Activated CD4-positive, alpha-beta T cell treated with anti-CD3 and anti-CD28 coated beads for 36 hours (primary cell): ENCODE measurements at regions of chr9 and their contacts with region 1.

Region 1: DNA sequence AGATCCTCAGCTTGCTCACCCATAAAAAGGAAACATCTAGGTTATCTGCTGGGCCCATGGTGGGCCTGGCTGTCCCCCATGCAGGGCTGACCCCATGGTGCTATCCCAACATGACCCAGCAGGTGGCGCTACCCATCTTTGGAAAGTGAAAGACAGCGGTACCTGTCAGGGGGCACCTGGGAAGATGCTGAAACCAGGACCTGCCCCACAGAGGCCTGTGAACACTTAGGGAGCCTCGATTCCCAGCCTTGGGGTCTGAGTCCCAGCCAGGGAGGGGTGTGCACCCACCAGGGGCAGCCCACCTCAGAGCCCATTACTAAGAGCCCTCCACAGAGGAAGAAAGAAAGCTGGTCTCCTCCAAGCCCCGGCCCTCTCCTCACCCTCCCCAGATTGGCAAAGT is 46.6 kb upstream of the IPPK start:
- DNase-seq: peak; percentile 88
- ATAC-seq: peak; percentile 71
- H3K4me3 Mint-ChIP-seq: no peak overlapping the region
- H3K27ac Mint-ChIP-seq: peak overlapping the region; percentile 42
- H3K4me1 Mint-ChIP-seq: peaks cover 19% of the 10 kb centered on the region
- H3K27me3 Mint-ChIP-seq: no peaks in the 10 kb centered on the region

Region 2: DNA sequence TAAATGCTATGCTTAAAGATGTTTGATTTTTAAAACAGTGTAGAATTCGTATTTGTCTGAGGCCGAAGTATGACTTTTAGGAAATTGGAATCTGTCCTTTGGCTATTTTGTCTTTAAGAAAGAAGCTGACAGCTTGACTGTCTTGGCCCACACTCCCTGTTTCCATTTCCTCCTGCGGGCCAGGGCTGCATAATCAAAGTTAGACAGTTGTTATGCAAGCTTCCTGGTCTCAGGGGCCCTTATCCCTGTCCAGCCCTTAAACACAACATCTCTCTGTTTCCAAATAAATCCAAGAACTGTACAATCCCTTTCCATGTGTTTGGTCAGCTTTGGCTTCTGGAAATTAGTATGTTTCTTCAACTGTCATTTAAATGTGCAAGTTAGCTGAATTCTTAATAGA is 126.2 kb before region 1 on chr9:
- CTCF ChIA-PET with region 1: no interaction called
- POLR2A ChIA-PET with region 1: no interaction called
- intact Hi-C with region 1: no loop called
- DNase-seq: no peak
- ATAC-seq: no peak
- H3K4me3 Mint-ChIP-seq: no peak overlapping the region
- H3K27ac Mint-ChIP-seq: no peak overlapping the region
- H3K4me1 Mint-ChIP-seq: peaks cover 3% of the 10 kb centered on the region
- H3K27me3 Mint-ChIP-seq: no peaks in the 10 kb centered on the region

Region 3: GRCh38 chr9:92657296-92658094 is 59.1 kb before region 1 on chr9:
- CTCF ChIA-PET with region 1: no interaction called
- POLR2A ChIA-PET with region 1: no interaction called
- intact Hi-C with region 1: no loop called
- DNase-seq: no peak
- ATAC-seq: no peak
- H3K4me3 Mint-ChIP-seq: no peak overlapping the region
- H3K27ac Mint-ChIP-seq: no peak overlapping the region
- H3K4me1 Mint-ChIP-seq: peaks cover 7% of the 10 kb centered on the region
- H3K27me3 Mint-ChIP-seq: no peaks in the 10 kb centered on the region

Region 4: DNA sequence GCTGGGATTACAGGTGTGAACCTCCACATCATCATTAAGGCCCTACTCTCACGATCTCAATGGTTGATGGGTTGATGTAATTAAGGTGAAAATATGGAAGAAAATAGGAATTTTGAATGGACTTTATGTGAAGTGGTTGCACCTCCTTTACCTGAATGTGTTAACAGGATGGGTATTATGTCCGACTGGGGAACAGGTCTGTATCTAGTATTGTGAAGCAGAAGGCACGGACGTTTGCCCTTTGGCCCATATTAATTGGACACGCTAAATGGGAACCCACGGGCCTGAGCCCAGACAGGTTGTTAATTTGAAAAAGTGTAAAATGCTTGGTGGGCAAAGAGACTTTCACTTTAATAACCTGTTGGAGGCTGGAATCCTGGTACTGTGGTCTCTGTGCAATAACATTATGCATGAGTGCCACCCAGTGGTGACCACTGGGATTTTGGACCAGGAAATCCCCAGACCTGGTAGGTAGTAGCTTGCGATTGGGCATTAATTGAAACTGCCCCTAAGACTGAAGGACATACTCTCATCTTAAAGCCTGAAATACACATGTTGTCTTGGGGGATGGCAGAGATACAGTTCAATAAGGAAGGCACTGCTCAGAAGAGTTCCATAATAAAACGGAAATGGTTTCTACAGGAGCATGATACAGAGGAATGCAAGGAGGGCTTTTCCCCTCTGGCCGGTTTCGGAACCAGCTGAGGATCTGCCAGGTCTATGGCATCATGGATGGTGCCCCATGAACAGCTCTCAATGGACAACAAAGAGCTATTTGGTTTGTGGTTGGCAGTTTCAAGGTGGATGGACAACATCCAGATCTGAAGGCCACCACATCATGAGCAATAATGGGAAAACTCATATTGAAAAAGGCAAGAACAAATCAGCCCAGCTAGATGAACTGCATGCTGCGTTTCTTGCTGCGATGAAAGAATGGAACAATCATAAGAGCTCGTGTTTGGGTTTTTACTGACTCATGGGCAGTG is 74.3 kb after region 1 on chr9:
- CTCF ChIA-PET with region 1: interaction called, 71 read pairs
- POLR2A ChIA-PET with region 1: no interaction called
- intact Hi-C with region 1: loop called (anchors 1 kb)
- DNase-seq: peak; percentile 84
- ATAC-seq: peak; percentile 87
- H3K4me3 Mint-ChIP-seq: no peak overlapping the region
- H3K27ac Mint-ChIP-seq: no peak overlapping the region
- H3K4me1 Mint-ChIP-seq: peaks cover 9% of the 10 kb centered on the region
- H3K27me3 Mint-ChIP-seq: no peaks in the 10 kb centered on the region

Region 5: DNA sequence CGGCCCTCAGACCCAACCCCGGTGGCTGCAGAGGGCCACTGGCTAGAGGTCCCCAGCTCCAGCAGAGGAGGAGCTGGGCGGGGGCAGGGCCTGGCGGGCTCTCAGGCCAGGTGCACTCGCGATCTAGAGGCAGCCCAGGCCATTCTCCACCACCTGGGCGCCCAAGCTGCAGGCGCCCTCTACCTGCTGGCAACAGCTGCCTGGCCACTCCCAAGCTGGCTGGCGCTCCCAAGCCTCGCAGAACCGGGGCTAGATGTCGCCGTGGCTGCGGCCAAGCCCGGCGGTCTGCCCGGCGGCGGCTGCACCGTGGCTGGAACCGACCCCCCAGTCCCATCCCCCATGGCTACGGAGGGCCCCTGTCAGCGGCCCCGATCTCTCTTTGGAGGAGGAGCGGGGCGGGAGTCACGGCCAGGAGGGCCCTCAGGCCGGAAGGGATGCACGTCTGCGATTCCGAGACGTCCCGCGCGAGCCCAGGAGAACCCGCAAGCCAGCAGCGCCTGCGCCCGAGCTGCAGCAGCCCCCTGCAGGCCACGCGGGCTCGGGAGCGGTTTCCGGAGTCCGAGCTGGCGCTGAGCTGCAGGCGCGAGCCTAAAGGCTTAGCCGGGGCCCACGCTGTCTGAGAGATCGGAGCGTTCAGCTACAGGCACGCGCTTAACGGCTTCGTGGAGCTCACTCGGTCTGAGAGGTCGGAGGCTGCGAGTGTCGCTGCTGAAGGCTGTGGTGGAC is 92.3 kb after region 1 on chr9:
- CTCF ChIA-PET with region 1: interaction called, 4 read pairs
- POLR2A ChIA-PET with region 1: no interaction called
- intact Hi-C with region 1: loop called in 1 of 2 experiments (anchors 5 kb)
- DNase-seq: peak; percentile 82
- ATAC-seq: peak; percentile 57
- H3K4me3 Mint-ChIP-seq: peak overlapping the region; percentile 75
- H3K27ac Mint-ChIP-seq: peak overlapping the region; percentile 72
- H3K4me1 Mint-ChIP-seq: peaks cover 5% of the 10 kb centered on the region
- H3K27me3 Mint-ChIP-seq: peaks cover 46% of the 10 kb centered on the region